Tibial artery (tissue), 4 donors: ENCODE measurements at regions of chr2 and their contacts with region 1.

Region 1: GRCh38 chr2:127479219-127479825 is 47.0 kb downstream of the IWS1 start:
- DNase-seq: no peak
- H3K4me3 ChIP-seq: no peak overlapping the region
- H3K27ac ChIP-seq: no peak overlapping the region
- H3K4me1 ChIP-seq: no peaks in the 10 kb centered on the region
- H3K27me3 ChIP-seq: no peaks in the 10 kb centered on the region
- CTCF ChIP-seq: peak; percentile 64 to 79

Region 2: GRCh38 chr2:127324635-127325034 is 154.7 kb before region 1 on chr2:
- intact Hi-C with region 1: loop called (anchors 5 kb)
- DNase-seq: no peak
- H3K4me3 ChIP-seq: no peak overlapping the region
- H3K27ac ChIP-seq: no peak overlapping the region
- H3K4me1 ChIP-seq: no peaks in the 10 kb centered on the region
- H3K27me3 ChIP-seq: no peaks in the 10 kb centered on the region
- CTCF ChIP-seq: peak; percentile 63 to 75

Region 3: DNA sequence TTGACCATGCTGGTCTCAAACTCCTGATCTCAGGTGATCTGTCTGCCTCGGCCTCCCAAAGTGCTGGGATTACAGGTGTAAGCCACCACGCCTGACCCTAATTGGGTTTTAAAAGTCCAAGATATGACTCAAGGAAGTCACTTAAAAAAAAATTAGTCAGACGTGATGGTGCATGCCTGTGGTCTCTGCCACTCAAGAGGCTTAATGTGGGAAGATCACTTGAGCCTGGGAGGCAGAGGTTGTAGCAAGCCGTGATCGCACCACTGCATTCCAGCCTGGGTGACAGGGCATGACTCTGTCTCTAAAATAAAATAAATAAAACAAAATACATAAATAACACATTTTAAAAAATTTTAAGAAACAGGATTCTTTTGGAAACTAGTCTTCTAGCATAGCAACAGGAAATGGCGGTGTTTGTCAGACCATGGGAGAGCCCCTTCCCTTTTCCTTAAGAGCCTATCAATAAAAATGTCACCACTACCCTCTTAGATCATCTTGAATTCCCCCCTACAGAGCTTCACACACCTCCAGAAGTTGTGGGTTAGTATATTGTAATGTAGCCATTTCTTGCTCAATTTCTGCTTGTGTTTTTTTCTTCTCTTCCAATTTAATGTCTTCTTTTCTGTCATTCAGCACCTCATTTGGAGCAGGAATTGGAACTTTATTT is 242.1 kb after region 1 on chr2:
- intact Hi-C with region 1: no loop called
- DNase-seq: no peak
- H3K4me3 ChIP-seq: no peak overlapping the region
- H3K27ac ChIP-seq: no peak overlapping the region
- H3K4me1 ChIP-seq: peaks cover 0 to 20% (median 0%) of the 10 kb centered on the region in 4 donors
- H3K27me3 ChIP-seq: no peaks in the 10 kb centered on the region
- CTCF ChIP-seq: no peak